Right cardiac atrium (tissue), 5 donors: ENCODE measurements at regions of chr9 and their contacts with region 1.

Region 1: DNA sequence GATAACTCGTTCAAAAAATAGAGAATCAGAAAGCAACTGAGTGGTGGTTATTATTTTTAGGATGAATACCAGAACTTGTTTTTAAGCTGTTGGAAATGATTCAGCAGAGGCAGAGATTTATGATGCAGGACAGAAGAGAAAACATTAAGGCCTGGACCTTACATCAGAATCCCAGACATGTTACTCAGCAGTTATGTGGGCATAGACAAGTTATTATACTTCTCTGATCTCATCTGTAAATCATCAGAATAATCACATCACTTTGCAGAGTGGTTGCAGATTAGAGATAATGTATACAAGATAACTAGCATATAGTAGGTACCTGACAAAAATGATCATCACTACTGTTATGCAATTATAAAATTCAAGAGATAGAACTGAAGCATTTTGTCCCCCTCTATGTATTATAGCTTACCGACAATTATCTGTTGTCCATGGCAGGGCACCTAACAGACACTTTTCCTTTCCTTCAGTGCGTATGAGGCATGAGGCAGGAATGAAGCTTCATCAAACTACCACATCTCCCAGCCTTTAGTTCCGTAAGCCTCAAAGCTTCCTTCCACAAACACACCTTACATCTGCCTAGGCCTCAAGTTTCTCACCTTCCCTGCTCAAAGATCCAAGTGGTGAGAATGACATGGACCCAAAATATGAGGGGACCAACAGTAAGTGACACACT is 165.9 kb downstream of the DENND1A start:
- DNase-seq: no peak
- ATAC-seq: no peak
- H3K4me3 ChIP-seq: no peak overlapping the region
- H3K27ac ChIP-seq: no peak overlapping the region
- H3K4me1 ChIP-seq: peaks cover 4% of the 10 kb centered on the region
- H3K27me3 ChIP-seq: no peaks in the 10 kb centered on the region

Region 2: GRCh38 chr9:123825342-123826060 is 61.5 kb after region 1 on chr9:
- intact Hi-C with region 1: loop called in 1 of 4 experiments (anchors 10 kb)
- DNase-seq: no peak
- ATAC-seq: no peak
- H3K4me3 ChIP-seq: no peak overlapping the region
- H3K27ac ChIP-seq: no peak overlapping the region
- H3K4me1 ChIP-seq: peaks cover 2% of the 10 kb centered on the region
- H3K27me3 ChIP-seq: no peaks in the 10 kb centered on the region